CD4-positive, alpha-beta T cell (primary cell): ENCODE measurements at regions of chr17 and their contacts with region 1.

Region 1: DNA sequence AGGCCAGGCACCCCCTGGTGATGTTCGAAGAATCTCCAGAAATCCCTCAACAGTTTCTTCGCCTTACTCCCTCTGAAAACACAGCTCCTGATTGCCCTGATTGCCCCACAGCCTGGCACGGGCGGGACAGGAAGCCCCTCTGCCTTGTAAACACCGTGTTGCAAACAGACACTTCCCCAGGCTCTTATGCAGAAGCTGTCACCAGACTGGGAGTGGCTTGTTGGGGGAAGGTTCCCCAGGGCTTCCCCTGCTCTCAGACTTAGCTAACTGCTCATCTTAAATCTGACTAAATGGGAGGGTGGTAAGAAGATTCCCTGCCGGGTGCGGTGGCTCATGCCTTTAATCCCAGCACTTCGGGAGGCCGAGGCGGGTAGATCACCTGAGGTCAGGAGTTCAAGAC is 11.2 kb downstream of the PIK3R5 start:
- DNase-seq: peak; percentile 62 to 95 (median 76)
- ATAC-seq: peak; percentile 94
- H3K4me3 ChIP-seq: peak overlapping the region; percentile 19
- H3K4me3 Mint-ChIP-seq: peak overlapping the region; percentile 80
- H3K27ac ChIP-seq: peak overlapping the region; percentile 66 to 77
- H3K27ac Mint-ChIP-seq: peak overlapping the region; percentile 92
- H3K4me1 ChIP-seq: peaks cover 80% of the 10 kb centered on the region
- H3K4me1 Mint-ChIP-seq: peaks cover 94% of the 10 kb centered on the region
- H3K27me3 ChIP-seq: no peaks in the 10 kb centered on the region
- H3K27me3 Mint-ChIP-seq: no peaks in the 10 kb centered on the region
- CTCF ChIP-seq: no peak

Region 2: GRCh38 chr17:8941520-8941919 is 12.8 kb before region 1 on chr17:
- CTCF ChIA-PET with region 1: interaction called, 10 read pairs
- POLR2A ChIA-PET with region 1: interaction called, 66 read pairs
- intact Hi-C with region 1: loop called in 1 of 2 experiments (anchors 1 kb)
- DNase-seq: peak; percentile 44 to 88 (median 62)
- ATAC-seq: peak; percentile 63
- H3K4me3 ChIP-seq: peak overlapping the region; percentile 21
- H3K4me3 Mint-ChIP-seq: peak overlapping the region; percentile 56
- H3K27ac ChIP-seq: peak overlapping the region; percentile 44 to 56
- H3K27ac Mint-ChIP-seq: peak overlapping the region; percentile 94
- H3K4me1 ChIP-seq: peaks cover 68% of the 10 kb centered on the region
- H3K4me1 Mint-ChIP-seq: peaks cover 93% of the 10 kb centered on the region
- H3K27me3 ChIP-seq: no peaks in the 10 kb centered on the region
- H3K27me3 Mint-ChIP-seq: no peaks in the 10 kb centered on the region
- CTCF ChIP-seq: no peak

Region 3: GRCh38 chr17:9021158-9021991 is 67.0 kb after region 1 on chr17 and contains the start of gene NTN1:
- CTCF ChIA-PET with region 1: no interaction called
- POLR2A ChIA-PET with region 1: no interaction called
- intact Hi-C with region 1: no loop called
- DNase-seq: peak in 13 of 14 experiments; percentile 25 to 80 (median 38)
- ATAC-seq: peak; percentile 84
- H3K4me3 ChIP-seq: peak within 1 kb of the TSS; percentile 51
- H3K4me3 Mint-ChIP-seq: peak within 1 kb of the TSS; percentile 74
- H3K27ac ChIP-seq: no peak within 1 kb of the TSS
- H3K27ac Mint-ChIP-seq: no peak within 1 kb of the TSS
- H3K4me1 ChIP-seq: peaks cover 26% of the 10 kb centered on the region
- H3K4me1 Mint-ChIP-seq: peaks cover 20% of the 10 kb centered on the region
- H3K27me3 ChIP-seq: peaks cover 52 to 80% of the 10 kb centered on the region in 2 experiments
- H3K27me3 Mint-ChIP-seq: peaks cover 58% of the 10 kb centered on the region
- CTCF ChIP-seq: no peak
- total RNA-seq, gene NTN1: 0.08 to 0.14 TPM

Region 4: GRCh38 chr17:9132944-9133575 is 178.7 kb after region 1 on chr17:
- CTCF ChIA-PET with region 1: no interaction called
- POLR2A ChIA-PET with region 1: no interaction called
- intact Hi-C with region 1: no loop called
- DNase-seq: no peak
- ATAC-seq: no peak
- H3K4me3 ChIP-seq: no peak overlapping the region
- H3K4me3 Mint-ChIP-seq: no peak overlapping the region
- H3K27ac ChIP-seq: no peak overlapping the region
- H3K27ac Mint-ChIP-seq: no peak overlapping the region
- H3K4me1 ChIP-seq: no peaks in the 10 kb centered on the region
- H3K4me1 Mint-ChIP-seq: no peaks in the 10 kb centered on the region
- H3K27me3 ChIP-seq: no peaks in the 10 kb centered on the region
- H3K27me3 Mint-ChIP-seq: no peaks in the 10 kb centered on the region
- CTCF ChIP-seq: no peak